HepG2 (cell line): ENCODE measurements at regions of chr14 and their contacts with region 1.

Region 1: DNA sequence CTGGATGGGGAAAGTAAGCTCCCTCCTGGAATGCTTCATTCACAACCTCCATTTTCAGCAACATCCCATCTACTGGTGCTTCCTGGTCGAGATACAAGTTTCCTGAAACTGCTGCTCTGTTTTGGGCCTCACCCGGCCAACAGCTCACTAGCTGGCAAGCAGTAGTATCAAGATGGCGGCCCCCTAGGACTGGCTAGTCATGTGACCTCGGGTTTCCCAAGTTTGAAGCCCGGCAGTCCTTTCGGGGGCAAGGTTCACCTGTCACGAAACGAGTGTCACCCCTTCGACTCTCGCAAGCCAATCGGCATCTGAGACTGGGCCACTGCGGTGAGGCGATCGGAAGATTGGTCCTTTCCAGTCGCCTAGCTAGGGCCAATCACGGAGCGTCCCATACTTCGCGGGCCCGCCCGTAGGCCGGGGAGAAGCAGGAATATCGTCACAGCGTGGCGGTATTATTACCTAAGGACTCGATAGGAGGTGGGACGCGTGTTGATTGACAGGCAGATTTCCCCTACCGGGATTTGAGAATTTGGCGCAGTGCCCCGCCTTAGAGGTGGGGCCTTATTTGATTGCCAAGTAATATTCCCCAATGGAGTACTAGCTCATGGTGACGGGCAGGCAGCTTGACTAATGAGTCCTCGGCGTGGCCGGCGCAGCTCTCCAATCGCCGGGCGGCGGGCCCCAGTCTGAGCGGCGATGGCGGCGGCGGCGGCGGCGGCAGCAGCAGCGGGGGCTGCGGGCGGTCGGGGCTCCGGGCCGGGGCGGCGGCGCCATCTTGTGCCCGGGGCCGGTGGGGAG is at the start of gene PABPN1:
- DNase-seq: peak; percentile 100
- ATAC-seq: peak; percentile 94
- H3K4me3 ChIP-seq: peak within 1 kb of the TSS; percentile 79 to 99 (median 98)
- H3K27ac ChIP-seq: peak within 1 kb of the TSS; percentile 95
- H3K4me1 ChIP-seq: peaks cover 36% of the 10 kb centered on the region
- H3K27me3 ChIP-seq: peaks cover 0 to 6% of the 10 kb centered on the region in 2 experiments; a peak in 2 of 5 replicates
- CTCF ChIP-seq: peak; percentile 10
- EP300 ChIP-seq: peak; percentile 68 to 90; a peak in 3 of 4 replicates
- POLR2A ChIP-seq: peak in 1 of 2 experiments; percentile 91; a peak in 2 of 4 replicates
- RAD21 ChIP-seq: peak; percentile 67
- total RNA-seq, gene PABPN1: 173 and 233 TPM in 2 replicates

Region 2: DNA sequence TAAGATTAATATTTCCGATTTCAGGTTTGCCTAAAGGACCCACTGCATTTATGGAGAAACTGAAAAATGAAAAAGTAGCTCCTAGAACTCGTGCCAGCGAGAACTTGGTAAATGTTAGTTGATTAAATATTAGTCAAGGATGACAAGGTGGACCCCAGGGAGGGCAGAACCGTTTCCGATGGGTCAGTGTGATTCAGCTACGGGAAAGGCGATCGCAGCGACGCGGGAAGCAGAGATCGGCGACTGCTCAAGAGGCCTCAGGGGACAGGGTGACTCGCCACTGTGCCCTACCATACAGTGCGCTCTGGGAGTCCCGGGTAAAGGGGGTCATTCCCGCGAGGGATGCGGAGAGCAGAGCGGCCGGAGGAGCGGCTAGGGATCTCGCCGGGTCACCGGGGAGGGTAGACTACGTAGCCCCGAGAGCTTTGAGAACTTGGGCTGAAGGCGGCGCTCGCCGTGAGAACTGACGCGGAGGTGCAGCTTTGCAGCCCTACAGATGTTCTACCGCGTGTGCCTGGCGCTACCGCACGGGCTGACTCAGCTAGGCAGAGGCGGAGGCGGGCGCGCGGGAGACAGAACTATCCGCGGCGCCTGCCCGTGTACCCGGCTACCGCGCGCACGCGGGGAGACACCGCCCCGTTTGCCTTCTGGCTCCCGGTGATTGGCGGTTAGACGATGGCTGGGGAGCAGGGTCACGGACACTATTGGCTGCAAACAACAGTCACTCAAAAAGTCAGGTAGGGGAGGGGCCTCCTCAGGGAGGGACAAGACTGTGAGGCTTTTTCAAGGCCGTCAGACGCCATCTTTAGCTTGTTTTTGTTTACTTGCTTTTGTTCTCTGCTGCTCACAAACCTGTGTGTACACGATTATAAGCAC is 314.2 kb before region 1 on chr14:
- CTCF ChIA-PET with region 1: no interaction called
- POLR2A ChIA-PET with region 1: interaction called, 34 read pairs
- in situ Hi-C with region 1: no loop called
- intact Hi-C with region 1: no loop called
- DNase-seq: peak; percentile 100
- ATAC-seq: peak; percentile 97
- H3K4me3 ChIP-seq: peak overlapping the region; percentile 68 to 82 (median 80)
- H3K27ac ChIP-seq: peak overlapping the region; percentile 86
- H3K4me1 ChIP-seq: peaks cover 52% of the 10 kb centered on the region
- H3K27me3 ChIP-seq: no peaks in the 10 kb centered on the region; a peak in 1 of 5 replicates
- CTCF ChIP-seq: peak; percentile 76
- EP300 ChIP-seq: peak in 1 of 2 experiments; percentile 9; a peak in 3 of 4 replicates
- POLR2A ChIP-seq: peak; percentile 96 to 98
- RAD21 ChIP-seq: peak; percentile 91

Region 3: DNA sequence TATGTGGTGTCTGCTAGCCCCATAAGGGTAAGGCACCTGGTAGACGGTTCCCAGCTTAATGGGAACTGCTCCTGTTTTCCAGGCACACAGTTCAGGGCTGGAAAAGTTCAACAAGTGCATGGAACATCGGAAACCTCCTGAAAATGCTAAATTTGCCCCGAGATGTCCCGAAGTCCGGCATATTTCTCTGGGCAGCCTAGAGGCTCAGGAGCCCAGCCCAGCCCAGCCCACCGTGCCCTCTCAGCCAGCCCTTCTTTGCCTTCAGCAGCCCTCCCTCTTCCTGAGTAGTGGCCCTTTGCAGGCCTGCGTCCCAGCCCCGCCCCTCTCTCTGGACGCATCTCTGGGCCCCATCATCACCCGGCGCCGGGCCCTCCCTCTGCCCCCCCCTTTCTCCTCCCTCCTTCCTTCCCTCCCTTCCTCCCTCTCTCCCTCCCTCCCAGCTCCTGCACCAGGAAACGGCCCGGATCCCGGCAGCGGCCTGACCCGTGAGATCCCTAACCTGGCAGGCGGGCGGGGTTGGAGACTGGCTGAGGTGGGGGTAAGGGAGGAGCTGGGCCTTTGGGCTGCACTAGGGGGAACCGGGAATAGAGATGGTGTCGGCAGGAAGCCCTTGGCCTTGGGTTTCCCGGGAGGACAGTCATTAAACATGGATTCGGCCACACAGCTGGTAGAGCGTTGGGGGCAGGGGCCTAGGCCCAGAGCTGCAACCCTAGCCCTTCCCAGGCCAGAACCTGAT is 14.4 kb before region 1 on chr14 and contains the start of gene BCL2L2:
- CTCF ChIA-PET with region 1: interaction called, 7 read pairs
- POLR2A ChIA-PET with region 1: interaction called, 1,053 read pairs
- in situ Hi-C with region 1: no loop called
- intact Hi-C with region 1: loop called (anchors 1 kb)
- DNase-seq: peak; percentile 98
- ATAC-seq: peak; percentile 76
- H3K4me3 ChIP-seq: peak within 1 kb of the TSS; percentile 95 to 99 (median 96)
- H3K27ac ChIP-seq: peak within 1 kb of the TSS; percentile 87
- H3K4me1 ChIP-seq: peaks cover 60% of the 10 kb centered on the region
- H3K27me3 ChIP-seq: no peaks in the 10 kb centered on the region; a peak in 1 of 5 replicates
- CTCF ChIP-seq: peak; percentile 54
- EP300 ChIP-seq: peak; percentile 69 to 85
- POLR2A ChIP-seq: peak in 1 of 2 experiments; percentile 90; a peak in 2 of 4 replicates
- RAD21 ChIP-seq: no peak
- total RNA-seq, gene BCL2L2: 26.6 and 28.1 TPM in 2 replicates

Region 4: DNA sequence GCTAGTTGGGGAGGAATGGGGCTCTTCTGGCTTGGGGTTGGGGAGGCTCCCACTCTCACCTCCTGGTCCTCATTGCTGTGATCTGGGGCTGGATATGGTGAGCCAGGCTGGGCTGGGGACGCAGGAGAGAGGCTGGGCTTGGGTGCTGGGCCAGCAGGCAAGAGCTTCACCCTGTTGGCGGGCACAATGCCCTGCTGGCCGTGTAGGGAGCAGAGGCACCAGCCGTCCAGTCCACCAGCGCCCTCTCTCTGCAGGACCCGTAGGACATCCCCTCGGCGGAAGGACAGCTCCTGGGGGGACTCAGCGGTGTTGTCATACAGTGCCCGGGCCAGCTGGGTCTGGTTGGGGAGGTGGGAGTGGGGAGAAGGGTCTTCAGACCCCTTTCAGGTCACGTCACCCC is 39.5 kb after region 1 on chr14:
- CTCF ChIA-PET with region 1: no interaction called
- POLR2A ChIA-PET with region 1: interaction called, 11 read pairs
- in situ Hi-C with region 1: no loop called
- intact Hi-C with region 1: no loop called
- DNase-seq: peak; percentile 54
- ATAC-seq: peak; percentile 70
- H3K4me3 ChIP-seq: no peak overlapping the region
- H3K27ac ChIP-seq: no peak overlapping the region
- H3K4me1 ChIP-seq: peaks cover 30% of the 10 kb centered on the region
- H3K27me3 ChIP-seq: peaks cover 50 to 93% of the 10 kb centered on the region in 2 experiments
- CTCF ChIP-seq: peak; percentile 77
- EP300 ChIP-seq: no peak
- POLR2A ChIP-seq: no peak
- RAD21 ChIP-seq: peak; percentile 25; the same call in 1 of the 2 replicates

Region 5: DNA sequence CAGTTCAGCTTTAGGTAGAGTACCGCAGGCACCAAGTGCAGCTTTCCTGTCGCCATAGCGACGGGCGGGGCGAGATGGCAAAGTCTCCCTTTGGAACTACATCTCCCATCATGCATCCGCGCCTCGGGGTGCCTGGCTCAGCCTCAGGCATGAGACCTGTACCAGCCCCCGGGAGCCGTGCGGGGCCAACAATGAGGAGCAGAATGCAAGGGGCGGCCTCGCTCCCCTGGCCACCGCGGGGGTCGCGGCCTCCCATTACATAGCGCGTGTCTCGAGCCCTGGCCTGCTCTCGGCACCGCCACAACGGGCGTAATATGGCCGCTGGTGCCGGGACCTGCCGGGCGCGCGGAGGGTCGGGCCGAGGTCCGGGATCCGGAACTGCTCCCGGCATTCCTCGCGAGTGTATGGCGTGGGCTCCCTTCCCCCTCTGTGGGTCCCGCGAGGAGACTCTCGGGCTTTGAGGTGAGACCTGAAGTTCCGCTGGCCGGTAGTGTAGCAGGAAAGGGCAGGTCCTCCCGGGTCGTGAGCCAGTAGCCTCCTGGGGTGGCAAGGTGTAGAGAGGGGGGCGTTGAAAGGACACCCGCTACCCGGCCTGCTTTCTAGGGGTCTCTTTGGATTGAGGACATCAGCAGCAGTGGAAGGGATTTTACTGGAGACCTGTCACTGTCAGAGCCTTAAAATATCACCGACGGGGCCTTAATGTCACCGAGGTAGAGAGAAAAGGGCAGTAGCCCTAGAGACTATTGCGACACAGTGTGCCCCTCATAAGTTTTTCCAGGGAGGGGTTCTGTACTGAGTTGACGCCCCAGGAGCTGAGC is 235.1 kb after region 1 on chr14 and contains the start of gene THTPA:
- CTCF ChIA-PET with region 1: no interaction called
- POLR2A ChIA-PET with region 1: interaction called, 58 read pairs
- in situ Hi-C with region 1: loop called (anchors 5 kb)
- intact Hi-C with region 1: loop called (anchors 2 kb)
- DNase-seq: peak; percentile 96
- ATAC-seq: peak; percentile 87
- H3K4me3 ChIP-seq: peak within 1 kb of the TSS; percentile 83 to 97 (median 84)
- H3K27ac ChIP-seq: peak within 1 kb of the TSS; percentile 89
- H3K4me1 ChIP-seq: peaks cover 60% of the 10 kb centered on the region
- H3K27me3 ChIP-seq: no peaks in the 10 kb centered on the region; a peak in 1 of 5 replicates
- CTCF ChIP-seq: peak; percentile 41
- EP300 ChIP-seq: peak in 1 of 2 experiments; percentile 54; a peak in 1 of 4 replicates
- POLR2A ChIP-seq: peak in 1 of 2 experiments; percentile 93; a peak in 2 of 4 replicates
- RAD21 ChIP-seq: peak; percentile 71
- total RNA-seq, gene THTPA: 7.1 and 7.4 TPM in 2 replicates

Region 6: DNA sequence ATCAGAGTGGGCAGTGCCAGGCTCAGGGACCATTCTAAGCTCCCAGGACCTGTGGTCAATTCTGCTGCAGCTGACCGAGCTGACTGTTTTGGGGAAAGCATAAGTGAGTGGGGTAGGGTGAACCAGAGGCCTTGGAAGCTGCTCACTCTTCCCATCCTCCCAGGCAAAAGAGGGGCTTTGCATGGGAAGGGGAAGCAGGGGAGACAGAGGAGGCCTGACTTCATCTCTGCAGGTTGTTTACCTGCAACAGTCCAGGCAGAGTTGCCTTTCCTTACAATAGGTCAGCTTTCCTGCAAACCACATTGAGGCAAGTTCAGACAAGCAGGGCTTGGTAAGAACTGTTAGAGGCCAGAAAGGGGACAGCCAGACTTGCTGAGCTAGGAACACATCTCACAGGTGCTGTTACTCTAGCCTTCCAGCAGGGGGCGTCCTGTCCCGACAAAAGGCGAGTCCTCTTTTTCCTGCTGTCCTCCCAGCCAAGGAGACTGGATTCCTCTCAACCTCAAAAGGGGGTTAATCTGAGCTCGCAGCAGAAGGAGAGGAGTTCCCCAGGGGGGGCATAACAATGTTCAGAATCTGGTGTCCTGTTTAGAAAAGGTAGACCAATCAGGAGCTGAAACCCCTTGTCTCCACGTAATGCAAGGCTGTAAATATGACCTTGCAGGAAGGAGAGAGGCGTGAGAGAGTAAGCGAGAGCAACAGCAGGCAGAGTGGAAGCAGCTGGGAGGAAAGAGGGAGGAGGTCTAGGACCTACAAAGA is 310.9 kb after region 1 on chr14:
- CTCF ChIA-PET with region 1: no interaction called
- POLR2A ChIA-PET with region 1: interaction called, 22 read pairs
- in situ Hi-C with region 1: no loop called
- intact Hi-C with region 1: no loop called
- DNase-seq: peak; percentile 96
- ATAC-seq: peak; percentile 28
- H3K4me3 ChIP-seq: peak overlapping the region; percentile 35 to 59 (median 41)
- H3K27ac ChIP-seq: peak overlapping the region; percentile 48
- H3K4me1 ChIP-seq: peaks cover 68% of the 10 kb centered on the region
- H3K27me3 ChIP-seq: no peaks in the 10 kb centered on the region; a peak in 1 of 5 replicates
- CTCF ChIP-seq: no peak
- EP300 ChIP-seq: peak; percentile 9 to 39; a peak in 1 of 4 replicates
- POLR2A ChIP-seq: no peak
- RAD21 ChIP-seq: peak; percentile 93